ENCODE measurements at regions of chr15 and their contacts with region 1.

Region 1: DNA sequence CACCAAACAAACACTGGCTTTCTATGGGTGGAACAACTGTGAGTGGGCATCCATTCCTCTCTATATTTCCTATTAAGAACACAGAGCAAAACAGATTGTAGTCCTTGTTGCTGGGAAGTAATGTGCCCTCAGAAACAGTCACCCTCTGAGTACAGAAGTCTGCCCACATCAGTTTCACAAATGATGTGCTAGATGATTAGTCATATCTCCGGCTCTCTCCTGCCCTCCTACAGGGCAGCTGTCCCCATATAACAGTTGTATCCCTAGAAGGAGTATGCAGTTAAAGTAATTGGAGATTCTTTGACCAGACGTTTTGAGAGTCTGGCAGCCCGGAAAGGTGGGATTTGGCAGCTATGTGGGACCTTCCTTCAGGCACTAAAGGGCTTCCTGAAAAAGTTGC is 159.9 kb downstream of the APBA2 start:
- DNase-seq: no peak
- H3K4me3 Mint-ChIP-seq: no peak overlapping the region
- H3K27ac Mint-ChIP-seq: no peak overlapping the region
- H3K4me1 Mint-ChIP-seq: peaks cover 13% of the 10 kb centered on the region
- H3K27me3 Mint-ChIP-seq: peaks cover 8% of the 10 kb centered on the region

Region 2: DNA sequence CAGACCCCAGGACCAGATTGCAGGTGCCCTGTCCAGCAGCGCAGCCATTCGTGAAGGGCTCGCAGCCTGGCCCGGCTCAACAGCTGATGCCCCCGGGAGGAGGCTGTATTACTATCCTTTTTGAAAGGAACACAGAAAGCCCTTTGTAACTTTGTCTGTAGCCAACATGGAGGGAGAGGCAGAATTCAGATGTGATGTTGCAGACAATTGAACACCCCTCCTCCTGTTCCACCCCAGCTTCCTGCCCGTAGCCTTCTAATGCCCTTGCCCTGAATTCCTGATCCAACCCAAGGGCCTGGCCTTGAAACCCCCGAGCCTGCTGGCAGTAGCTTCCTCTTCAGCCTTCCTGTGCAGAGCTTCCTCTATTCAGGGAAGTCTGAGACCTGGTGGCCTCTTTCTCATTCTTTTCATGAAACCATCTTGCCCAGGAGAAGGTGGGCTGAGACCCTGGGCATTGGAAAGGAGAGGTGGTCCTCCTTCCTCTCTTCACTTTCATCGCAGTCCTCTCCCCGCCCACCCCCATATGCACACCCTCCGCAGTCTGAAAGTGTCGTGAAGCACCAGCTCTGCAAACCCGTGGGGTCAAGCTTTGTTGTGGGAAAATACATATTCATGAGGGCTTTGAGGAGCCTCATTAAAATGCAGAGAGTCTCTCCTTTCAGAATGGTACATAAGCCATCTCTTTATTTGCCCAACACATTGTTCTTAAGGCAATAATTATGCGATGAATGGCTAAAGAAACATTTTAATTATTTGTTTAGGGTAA is 50.7 kb before region 1 on chr15:
- intact Hi-C with region 1: loop called (anchors 2 kb)
- DNase-seq: no peak
- H3K4me3 Mint-ChIP-seq: no peak overlapping the region
- H3K27ac Mint-ChIP-seq: no peak overlapping the region
- H3K4me1 Mint-ChIP-seq: peaks cover 23% of the 10 kb centered on the region
- H3K27me3 Mint-ChIP-seq: peaks cover 4% of the 10 kb centered on the region

Region 3: DNA sequence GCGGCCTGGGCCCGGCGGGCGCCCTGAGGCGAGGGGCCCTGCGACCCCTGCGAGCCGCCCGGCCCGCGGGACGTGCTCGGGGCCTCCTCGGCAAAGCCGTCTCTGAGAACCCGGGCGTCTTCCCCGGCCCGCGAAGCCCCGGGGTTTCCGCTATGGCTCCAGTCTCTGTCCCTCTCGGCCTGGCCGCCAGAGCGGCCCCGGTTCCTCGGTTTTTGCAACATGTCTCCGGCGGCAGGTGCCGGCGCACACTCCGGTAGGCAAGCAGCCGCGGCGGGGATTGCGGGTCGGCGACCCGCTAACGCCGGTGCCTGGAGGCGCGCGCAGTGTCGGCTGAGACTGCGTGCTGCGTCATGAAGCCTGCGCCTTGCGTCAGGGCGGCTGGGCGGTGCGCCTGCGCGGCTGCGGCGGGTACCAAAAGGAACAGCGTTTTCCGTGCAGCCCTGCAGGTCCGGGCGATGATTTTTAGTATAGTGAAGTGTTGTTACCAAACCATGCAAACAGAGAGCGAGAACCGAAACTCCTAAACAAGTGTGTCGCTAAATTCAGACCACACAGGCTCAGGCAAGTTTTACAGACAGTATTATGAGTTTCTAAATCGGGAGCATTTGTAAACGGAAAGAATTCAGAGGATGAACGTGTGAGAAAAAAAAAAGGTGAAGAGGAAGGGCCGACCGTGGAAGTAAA is 223.9 kb after region 1 on chr15 and contains the start of gene NSMCE3:
- intact Hi-C with region 1: loop called (anchors 5 kb)
- DNase-seq: peak; percentile 90
- H3K4me3 Mint-ChIP-seq: peak within 1 kb of the TSS; percentile 99
- H3K27ac Mint-ChIP-seq: peak within 1 kb of the TSS; percentile 99
- H3K4me1 Mint-ChIP-seq: peaks cover 46% of the 10 kb centered on the region
- H3K27me3 Mint-ChIP-seq: peaks cover 6% of the 10 kb centered on the region
- total RNA-seq, gene NSMCE3: 10.8 and 11.7 TPM in 2 replicates

Measured in activated T-helper 1 cell treated with anti-CD3 and anti-CD28 coated beads, Interleukin-12 subunit alpha, Interleukin-12 subunit beta, Interleukin-2, Interleukin-4 antibody, amounts not matched to agents 30 ng/mL and 10 ng/mL and 1 ng/mL, durations not matched to agents 14 hours and 24 hours and 36 hours (primary cell).